Brain microvascular endothelial cell (primary cell): ENCODE measurements at regions of chr17 and their contacts with region 1.

Region 1: GRCh38 chr17:43694077-43694870 is 32.6 kb upstream of the MEOX1 start:
- DNase-seq: peak; percentile 71
- H3K4me3 ChIP-seq: no peak overlapping the region
- H3K27ac ChIP-seq: no peak overlapping the region
- H3K27me3 ChIP-seq: no peaks in the 10 kb centered on the region
- CTCF ChIP-seq: peak; percentile 91

Region 2: GRCh38 chr17:43755389-43755875 is 61.2 kb after region 1 on chr17:
- in situ Hi-C with region 1: loop called (anchors 10 kb)
- DNase-seq: no peak
- H3K4me3 ChIP-seq: no peak overlapping the region
- H3K27ac ChIP-seq: no peak overlapping the region
- H3K27me3 ChIP-seq: peaks cover 28% of the 10 kb centered on the region
- CTCF ChIP-seq: no peak